Mammary epithelial cell (primary cell): ENCODE measurements at regions of chr3 and their contacts with region 1.

Region 1: DNA sequence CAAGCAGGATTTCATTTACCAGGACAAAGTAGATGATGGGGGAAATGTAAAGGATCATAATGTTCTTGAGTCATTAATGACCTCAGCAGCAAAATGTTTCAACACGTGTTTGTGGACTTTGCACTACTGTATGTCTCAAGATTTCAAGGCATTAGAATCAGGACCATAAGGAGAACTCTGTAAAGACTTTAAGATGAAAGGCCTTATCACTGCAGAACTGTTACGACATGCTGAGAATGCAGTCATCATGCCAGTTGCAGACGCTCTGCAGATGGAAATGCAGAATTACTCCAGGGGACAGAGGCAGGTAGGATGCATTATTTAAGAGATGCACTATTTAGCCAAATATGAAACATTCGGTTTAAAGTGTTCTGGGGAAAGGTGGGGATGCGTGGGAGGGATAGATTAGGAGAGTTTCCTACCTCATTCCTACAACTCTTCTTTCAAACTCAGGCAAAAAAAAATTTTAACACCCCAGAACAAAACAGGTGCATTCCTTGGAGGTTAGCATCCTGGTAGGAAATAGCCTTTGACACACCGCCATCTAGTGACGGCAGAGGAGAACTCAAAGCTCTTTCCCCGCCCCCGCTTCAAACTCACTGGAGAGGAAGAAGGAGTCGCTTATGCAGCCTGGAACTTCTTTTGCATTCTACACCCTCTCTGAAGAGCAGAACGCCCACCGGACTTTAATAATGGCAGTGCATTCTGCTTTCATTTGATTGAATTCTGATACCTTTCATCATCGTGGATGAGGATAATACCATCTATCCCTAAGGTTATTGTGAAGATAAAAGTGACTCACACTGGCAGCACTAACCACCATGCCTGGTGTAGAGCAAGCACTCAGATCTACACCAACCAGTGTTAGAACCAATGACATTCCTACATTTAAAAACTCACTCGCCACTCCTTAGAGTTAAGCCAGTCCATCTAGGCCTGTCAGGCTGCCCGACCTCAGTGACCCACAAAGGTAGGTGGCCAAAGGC is 43.1 kb upstream of the TOPAZ1 start:
- DNase-seq: peak; percentile 68
- H3K4me3 ChIP-seq: no peak overlapping the region
- H3K27ac ChIP-seq: no peak overlapping the region
- H3K4me1 ChIP-seq: peaks cover 5% of the 10 kb centered on the region
- H3K27me3 ChIP-seq: no peaks in the 10 kb centered on the region
- CTCF ChIP-seq: peak; percentile 78 to 90

Region 2: DNA sequence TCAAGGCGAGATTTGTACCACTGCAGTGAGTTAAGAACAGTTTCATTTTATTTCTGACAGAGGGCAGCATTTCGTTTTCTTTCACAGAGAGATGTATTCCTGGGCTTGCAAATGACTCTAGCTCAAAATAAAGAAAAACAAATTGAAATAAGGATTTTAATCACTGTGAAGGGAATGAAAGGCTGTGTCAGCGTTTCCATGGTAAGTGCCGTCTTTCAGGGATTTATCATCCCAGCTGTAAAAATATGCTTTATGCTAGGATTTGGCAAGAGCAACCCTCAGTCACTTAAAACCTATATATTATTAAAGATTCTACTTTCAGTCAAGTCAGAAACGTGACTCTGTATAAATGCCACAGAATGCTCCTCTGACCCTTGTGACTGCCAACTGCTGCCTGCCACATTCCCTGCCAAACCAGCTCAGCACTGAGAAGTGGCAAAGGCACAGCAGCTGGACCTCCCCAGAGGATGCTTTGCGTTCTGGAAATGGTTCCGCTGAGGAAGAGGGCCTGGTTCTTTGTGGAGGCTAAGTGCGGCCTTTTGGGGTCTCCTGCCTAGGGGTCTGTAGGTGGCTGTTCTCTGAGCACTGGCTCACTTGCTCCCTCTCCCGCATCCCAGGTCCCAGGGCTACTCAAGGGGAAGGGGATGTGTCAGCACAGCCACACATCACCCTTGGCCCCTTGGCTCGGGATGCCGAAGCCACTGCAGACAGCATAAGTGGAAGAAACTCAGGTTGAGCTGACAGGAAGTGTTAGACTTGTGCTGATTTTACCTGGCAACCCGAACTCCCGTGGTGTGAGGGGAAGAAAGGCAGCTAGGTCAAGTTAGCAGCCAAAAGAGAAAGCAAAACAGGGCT is 1036.1 kb before region 1 on chr3:
- CTCF ChIA-PET with region 1: no interaction called
- dilution Hi-C with region 1: no loop called
- in situ Hi-C with region 1: no loop called
- intact Hi-C with region 1: loop called (anchors 5 kb)
- DNase-seq: no peak
- H3K4me3 ChIP-seq: no peak overlapping the region
- H3K27ac ChIP-seq: no peak overlapping the region
- H3K4me1 ChIP-seq: no peaks in the 10 kb centered on the region
- H3K27me3 ChIP-seq: no peaks in the 10 kb centered on the region
- CTCF ChIP-seq: peak; percentile 11 to 48

Region 3: GRCh38 chr3:43531835-43532234 is 666.7 kb before region 1 on chr3:
- CTCF ChIA-PET with region 1: no interaction called
- dilution Hi-C with region 1: no loop called
- in situ Hi-C with region 1: loop called (anchors 25 kb)
- intact Hi-C with region 1: no loop called
- DNase-seq: peak; percentile 86
- H3K4me3 ChIP-seq: no peak overlapping the region
- H3K27ac ChIP-seq: no peak overlapping the region
- H3K4me1 ChIP-seq: no peaks in the 10 kb centered on the region
- H3K27me3 ChIP-seq: no peaks in the 10 kb centered on the region
- CTCF ChIP-seq: no peak

Region 4: GRCh38 chr3:43690400-43691119 is 508.0 kb before region 1 on chr3 and contains the start of gene ABHD5:
- CTCF ChIA-PET with region 1: no interaction called
- dilution Hi-C with region 1: no loop called
- in situ Hi-C with region 1: no loop called
- intact Hi-C with region 1: loop called (anchors 2 kb)
- DNase-seq: peak; percentile 95
- H3K4me3 ChIP-seq: peak within 1 kb of the TSS; percentile 74 to 87 (median 85)
- H3K27ac ChIP-seq: peak within 1 kb of the TSS; percentile 55
- H3K4me1 ChIP-seq: peaks cover 42% of the 10 kb centered on the region
- H3K27me3 ChIP-seq: no peaks in the 10 kb centered on the region
- CTCF ChIP-seq: peak in 1 of 2 donors; percentile 29
- total RNA-seq, gene ABHD5: 37.9 to 59.8 TPM

Region 5: GRCh38 chr3:43855674-43856299 is 342.8 kb before region 1 on chr3:
- CTCF ChIA-PET with region 1: no interaction called
- dilution Hi-C with region 1: no loop called
- in situ Hi-C with region 1: no loop called
- intact Hi-C with region 1: loop called (anchors 1 kb)
- DNase-seq: peak; percentile 49
- H3K4me3 ChIP-seq: no peak overlapping the region
- H3K27ac ChIP-seq: no peak overlapping the region
- H3K4me1 ChIP-seq: peaks cover 19% of the 10 kb centered on the region
- H3K27me3 ChIP-seq: no peaks in the 10 kb centered on the region
- CTCF ChIP-seq: peak; percentile 60 to 87

Region 6: GRCh38 chr3:43998836-43999727 is 199.5 kb before region 1 on chr3:
- CTCF ChIA-PET with region 1: no interaction called
- dilution Hi-C with region 1: no loop called
- in situ Hi-C with region 1: no loop called
- intact Hi-C with region 1: loop called (anchors 1 kb)
- DNase-seq: peak; percentile 51
- H3K4me3 ChIP-seq: peak overlapping the region; percentile 82 to 99 (median 82)
- H3K27ac ChIP-seq: peak overlapping the region; percentile 16
- H3K4me1 ChIP-seq: peaks cover 35% of the 10 kb centered on the region
- H3K27me3 ChIP-seq: no peaks in the 10 kb centered on the region
- CTCF ChIP-seq: no peak